ENCODE measurements at regions of chr12 and their contacts with region 1.

Region 1: GRCh38 chr12:113174461-113175384 is 10.6 kb downstream of the DDX54 start:
- DNase-seq: peak in 1 of 2 experiments; percentile 96
- H3K4me3 ChIP-seq: no peak overlapping the region
- H3K27ac ChIP-seq: no peak overlapping the region
- H3K4me1 ChIP-seq: no peaks in the 10 kb centered on the region
- H3K27me3 ChIP-seq: no peaks in the 10 kb centered on the region
- CTCF ChIP-seq: peak; percentile 88 to 97 (median 95)
- EP300 ChIP-seq: no peak
- POLR2A ChIP-seq: no peak
- RAD21 ChIP-seq: peak; percentile 86 to 89

Region 2: GRCh38 chr12:113152835-113153814 is 21.6 kb before region 1 on chr12:
- CTCF ChIA-PET with region 1: interaction called, 114 read pairs
- POLR2A ChIA-PET with region 1: interaction called, 3 read pairs
- DNase-seq: peak; percentile 51 to 86
- H3K4me3 ChIP-seq: peak overlapping the region; percentile 29 to 59 (median 50)
- H3K27ac ChIP-seq: no peak overlapping the region
- H3K4me1 ChIP-seq: peaks cover 7 to 23% (median 19%) of the 10 kb centered on the region in 4 experiments
- H3K27me3 ChIP-seq: peaks cover 1 to 34% (median 26%) of the 10 kb centered on the region in 4 experiments
- CTCF ChIP-seq: peak; percentile 53 to 61 (median 60)
- EP300 ChIP-seq: no peak
- POLR2A ChIP-seq: no peak
- RAD21 ChIP-seq: peak; percentile 64 to 74

Region 3: DNA sequence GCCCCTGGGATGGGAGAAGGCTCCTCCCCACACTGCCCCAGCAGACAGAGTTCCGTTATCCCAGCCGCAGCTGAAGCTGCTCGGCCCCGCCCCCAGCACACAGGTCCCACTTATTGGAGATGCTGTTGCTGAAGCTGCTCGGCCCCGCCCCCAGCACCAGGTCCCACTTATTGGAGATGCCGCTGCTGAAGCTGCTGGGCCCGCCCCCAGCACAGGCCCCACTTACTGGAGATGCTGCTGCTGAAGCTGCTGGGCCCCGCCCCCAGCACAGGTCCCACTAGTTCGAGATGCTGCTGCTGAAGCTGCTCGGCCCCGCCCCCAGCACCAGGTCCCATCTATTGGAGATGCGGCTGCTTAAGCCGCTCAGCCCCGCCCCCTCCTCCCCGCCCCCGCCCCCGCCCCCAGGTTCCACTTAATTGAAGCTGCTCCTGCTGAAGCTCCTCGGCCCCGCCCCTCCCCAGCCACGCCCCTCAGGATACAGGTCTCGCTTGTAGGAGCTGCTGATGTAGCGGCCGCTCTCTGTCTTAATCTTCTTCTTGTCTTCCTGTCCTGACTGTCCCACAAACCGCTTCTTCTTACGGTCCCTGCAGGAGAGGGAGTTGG is 13.2 kb before region 1 on chr12:
- CTCF ChIA-PET with region 1: interaction called, 114 read pairs
- POLR2A ChIA-PET with region 1: interaction called, 28 read pairs
- DNase-seq: peak; percentile 95 to 98
- H3K4me3 ChIP-seq: no peak overlapping the region
- H3K27ac ChIP-seq: no peak overlapping the region
- H3K4me1 ChIP-seq: peaks cover 5 to 13% (median 9%) of the 10 kb centered on the region in 4 experiments
- H3K27me3 ChIP-seq: no peaks in the 10 kb centered on the region
- CTCF ChIP-seq: no peak
- EP300 ChIP-seq: no peak
- POLR2A ChIP-seq: no peak
- RAD21 ChIP-seq: no peak

Region 4: GRCh38 chr12:113184900-113185773 is 10.4 kb after region 1 on chr12 and contains the starts of genes DDX54 and RITA1:
- CTCF ChIA-PET with region 1: interaction called, 12 read pairs
- POLR2A ChIA-PET with region 1: interaction called, 30 read pairs
- DNase-seq: peak; percentile 81 to 90
- H3K4me3 ChIP-seq: peak within 1 kb of the TSS; percentile 75 to 90 (median 80)
- H3K27ac ChIP-seq: peak within 1 kb of the TSS; percentile 84
- H3K4me1 ChIP-seq: peaks cover 0 to 6% (median 3%) of the 10 kb centered on the region in 4 experiments; a peak in 4 of 7 replicates
- H3K27me3 ChIP-seq: no peaks in the 10 kb centered on the region
- CTCF ChIP-seq: no peak
- EP300 ChIP-seq: peak in 1 of 2 experiments; percentile 95; a peak in 2 of 3 replicates
- POLR2A ChIP-seq: peak; percentile 78 to 91
- RAD21 ChIP-seq: no peak
- total RNA-seq, gene DDX54: 112 and 113 TPM in 2 replicates
- total RNA-seq, gene RITA1: 25.8 and 26.4 TPM in 2 replicates

Region 5: DNA sequence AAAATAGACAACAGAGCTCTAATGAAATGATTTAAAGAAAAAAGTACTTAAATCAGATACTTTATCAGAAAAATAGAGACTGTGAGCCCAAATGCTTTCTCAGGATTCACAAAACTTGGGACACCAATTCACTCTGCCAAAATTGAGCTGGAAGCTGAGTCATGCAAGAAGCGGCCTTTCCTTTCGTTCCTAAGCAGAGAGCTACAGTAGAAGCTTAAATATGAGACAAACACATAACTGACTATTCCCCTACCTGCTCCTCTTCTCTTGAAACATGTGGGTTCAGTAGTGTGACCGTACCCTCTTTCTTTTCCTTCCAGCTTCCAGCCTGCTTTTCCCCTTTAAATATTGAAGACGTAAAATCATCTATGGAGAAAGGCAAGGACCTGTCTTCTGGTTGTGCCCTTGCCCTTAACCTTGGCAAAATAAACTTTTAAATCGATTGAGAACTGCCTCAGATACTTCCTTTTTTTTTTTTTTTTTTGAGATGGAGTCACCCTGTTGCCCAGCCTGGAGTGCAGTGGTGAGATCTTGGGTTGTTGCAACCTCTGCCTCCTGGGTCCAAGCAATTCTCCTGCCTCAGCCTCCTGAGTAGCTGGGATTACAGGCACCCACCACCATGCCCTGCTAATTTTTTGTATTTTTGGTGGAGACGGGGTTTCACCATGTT is 233.3 kb after region 1 on chr12:
- CTCF ChIA-PET with region 1: no interaction called
- POLR2A ChIA-PET with region 1: no interaction called
- DNase-seq: no peak
- H3K4me3 ChIP-seq: no peak overlapping the region
- H3K27ac ChIP-seq: no peak overlapping the region
- H3K4me1 ChIP-seq: peaks cover 0 to 5% (median 3%) of the 10 kb centered on the region in 4 experiments; a peak in 3 of 7 replicates
- H3K27me3 ChIP-seq: no peaks in the 10 kb centered on the region
- CTCF ChIP-seq: no peak
- EP300 ChIP-seq: no peak
- POLR2A ChIP-seq: no peak
- RAD21 ChIP-seq: no peak

Region 6: GRCh38 chr12:113462117-113462774 is 287.5 kb after region 1 on chr12:
- CTCF ChIA-PET with region 1: no interaction called
- POLR2A ChIA-PET with region 1: no interaction called
- DNase-seq: peak in 1 of 2 experiments; percentile 90
- H3K4me3 ChIP-seq: peak overlapping the region in 1 of 4 experiments; percentile 47; a peak in 3 of 8 replicates
- H3K27ac ChIP-seq: no peak overlapping the region
- H3K4me1 ChIP-seq: peaks cover 4 to 32% (median 22%) of the 10 kb centered on the region in 4 experiments
- H3K27me3 ChIP-seq: peaks cover 49 to 58% (median 52%) of the 10 kb centered on the region in 4 experiments
- CTCF ChIP-seq: peak in 2 of 3 experiments; percentile 84 to 94; a peak in 3 of 4 replicates
- EP300 ChIP-seq: no peak
- POLR2A ChIP-seq: no peak
- RAD21 ChIP-seq: peak; percentile 71 to 77

Measured in H1 (cell line).